ENCODE measurements at regions of chr9 and their contacts with region 1.

Region 1: GRCh38 chr9:70484210-70485130 is 70.0 kb upstream of the KLF9 start:
- DNase-seq: peak; percentile 59
- ATAC-seq: peak; percentile 92
- H3K4me3 ChIP-seq: no peak overlapping the region
- H3K27ac ChIP-seq: no peak overlapping the region
- H3K4me1 ChIP-seq: peaks cover 18% of the 10 kb centered on the region
- H3K27me3 ChIP-seq: peaks cover 0 to 22% of the 10 kb centered on the region in 2 experiments; a peak in 1 of 5 replicates
- CTCF ChIP-seq: peak; percentile 80
- EP300 ChIP-seq: no peak
- POLR2A ChIP-seq: no peak
- RAD21 ChIP-seq: peak; percentile 62

Region 2: GRCh38 chr9:69847491-69847890 is 637.0 kb before region 1 on chr9:
- CTCF ChIA-PET with region 1: no interaction called
- POLR2A ChIA-PET with region 1: no interaction called
- in situ Hi-C with region 1: no loop called
- intact Hi-C with region 1: no loop called
- DNase-seq: no peak
- ATAC-seq: no peak
- H3K4me3 ChIP-seq: no peak overlapping the region
- H3K27ac ChIP-seq: no peak overlapping the region
- H3K4me1 ChIP-seq: no peaks in the 10 kb centered on the region
- H3K27me3 ChIP-seq: no peaks in the 10 kb centered on the region
- CTCF ChIP-seq: no peak
- EP300 ChIP-seq: no peak
- POLR2A ChIP-seq: no peak
- RAD21 ChIP-seq: no peak

Region 3: GRCh38 chr9:69971643-69972449 is 512.6 kb before region 1 on chr9:
- CTCF ChIA-PET with region 1: no interaction called
- POLR2A ChIA-PET with region 1: no interaction called
- in situ Hi-C with region 1: no loop called
- intact Hi-C with region 1: loop called (anchors 5 kb)
- DNase-seq: peak; percentile 27
- ATAC-seq: peak; percentile 91
- H3K4me3 ChIP-seq: no peak overlapping the region
- H3K27ac ChIP-seq: no peak overlapping the region
- H3K4me1 ChIP-seq: no peaks in the 10 kb centered on the region
- H3K27me3 ChIP-seq: peaks cover 3 to 13% of the 10 kb centered on the region in 2 experiments; a peak in 2 of 5 replicates
- CTCF ChIP-seq: peak; percentile 90
- EP300 ChIP-seq: no peak
- POLR2A ChIP-seq: no peak
- RAD21 ChIP-seq: peak; percentile 65

Region 4: GRCh38 chr9:70303268-70303667 is 181.2 kb before region 1 on chr9:
- CTCF ChIA-PET with region 1: no interaction called
- POLR2A ChIA-PET with region 1: no interaction called
- in situ Hi-C with region 1: no loop called
- intact Hi-C with region 1: no loop called
- DNase-seq: no peak
- ATAC-seq: no peak
- H3K4me3 ChIP-seq: no peak overlapping the region
- H3K27ac ChIP-seq: no peak overlapping the region
- H3K4me1 ChIP-seq: no peaks in the 10 kb centered on the region
- H3K27me3 ChIP-seq: no peaks in the 10 kb centered on the region
- CTCF ChIP-seq: no peak
- EP300 ChIP-seq: no peak
- POLR2A ChIP-seq: no peak
- RAD21 ChIP-seq: no peak

Region 5: DNA sequence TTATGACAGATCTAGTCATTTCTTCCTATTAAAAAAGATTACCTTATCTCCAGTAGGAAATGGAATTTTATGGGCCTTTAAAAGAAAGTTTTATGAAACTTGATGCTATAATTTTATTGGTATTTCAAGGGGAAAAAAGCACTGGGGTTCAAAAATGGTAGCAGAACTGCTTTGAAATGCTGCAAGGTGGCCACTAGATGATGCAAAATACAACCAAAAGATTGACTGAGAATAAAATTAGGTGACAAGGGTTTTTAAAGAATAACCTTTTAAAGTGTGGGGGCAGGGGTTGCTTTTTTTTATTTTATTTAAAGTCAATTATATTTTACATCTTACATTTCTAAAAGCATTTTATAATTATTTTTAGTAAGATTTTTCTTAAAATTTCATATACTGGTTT is 131.7 kb before region 1 on chr9:
- CTCF ChIA-PET with region 1: no interaction called
- POLR2A ChIA-PET with region 1: no interaction called
- in situ Hi-C with region 1: loop called (anchors 5 kb)
- intact Hi-C with region 1: no loop called
- DNase-seq: no peak
- ATAC-seq: no peak
- H3K4me3 ChIP-seq: no peak overlapping the region
- H3K27ac ChIP-seq: no peak overlapping the region
- H3K4me1 ChIP-seq: no peaks in the 10 kb centered on the region
- H3K27me3 ChIP-seq: no peaks in the 10 kb centered on the region
- CTCF ChIP-seq: 0 out of 2 replicates have a peak, but pooled peaks have one; percentile 27
- EP300 ChIP-seq: no peak
- POLR2A ChIP-seq: no peak
- RAD21 ChIP-seq: no peak

Region 6: GRCh38 chr9:70419546-70420266 is 64.8 kb before region 1 on chr9:
- CTCF ChIA-PET with region 1: no interaction called
- POLR2A ChIA-PET with region 1: interaction called, 40 read pairs
- in situ Hi-C with region 1: loop called (anchors 5 kb)
- intact Hi-C with region 1: loop called (anchors 2 kb)
- DNase-seq: peak; percentile 91
- ATAC-seq: peak; percentile 61
- H3K4me3 ChIP-seq: peak overlapping the region; percentile 61 to 84 (median 67)
- H3K27ac ChIP-seq: peak overlapping the region; percentile 100
- H3K4me1 ChIP-seq: peaks cover 39% of the 10 kb centered on the region
- H3K27me3 ChIP-seq: peaks cover 0 to 4% of the 10 kb centered on the region in 2 experiments; a peak in 2 of 5 replicates
- CTCF ChIP-seq: 0 out of 2 replicates have a peak, but pooled peaks have one; percentile 6
- EP300 ChIP-seq: peak; percentile 22 to 78; a peak in 3 of 4 replicates
- POLR2A ChIP-seq: peak in 1 of 2 experiments; percentile 97; a peak in 2 of 4 replicates
- RAD21 ChIP-seq: 0 out of 2 replicates have a peak, but pooled peaks have one; percentile 10

Region 7: DNA sequence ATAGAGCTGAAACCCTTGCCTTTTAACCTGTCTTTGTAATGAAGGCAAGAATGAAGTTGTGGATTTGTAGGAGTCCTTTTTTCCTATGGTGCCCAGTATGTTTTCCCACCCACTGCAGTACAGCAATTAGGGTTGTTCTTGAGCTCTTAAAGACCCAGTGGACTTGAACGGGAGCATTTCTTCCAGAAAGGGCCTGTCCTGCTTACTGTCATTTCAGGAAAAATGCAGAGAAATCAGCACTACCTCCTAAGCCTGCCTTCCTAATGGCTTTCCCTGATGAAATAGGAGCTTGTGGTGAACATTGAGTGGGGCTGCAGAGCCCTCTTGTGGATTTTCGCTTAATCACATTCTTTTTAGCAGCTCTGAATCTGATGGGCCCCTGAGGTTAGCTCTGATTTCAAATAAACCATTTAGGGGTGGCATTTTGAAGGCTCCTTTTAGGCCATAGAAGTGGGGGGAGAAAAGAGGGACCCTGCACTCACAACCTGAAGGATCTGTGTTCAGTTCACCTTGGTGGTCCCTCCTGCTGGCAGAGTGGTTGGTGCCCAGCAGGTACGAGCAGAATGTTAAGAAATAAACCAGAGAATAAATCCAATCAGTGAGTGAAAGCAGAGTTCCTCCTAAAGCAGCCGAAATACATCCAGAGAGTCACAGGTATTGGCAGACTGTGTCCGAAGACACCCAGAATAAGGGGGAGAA is 118.0 kb after region 1 on chr9:
- CTCF ChIA-PET with region 1: no interaction called
- POLR2A ChIA-PET with region 1: no interaction called
- in situ Hi-C with region 1: no loop called
- intact Hi-C with region 1: loop called (anchors 1 kb)
- DNase-seq: peak; percentile 64
- ATAC-seq: peak; percentile 92
- H3K4me3 ChIP-seq: no peak overlapping the region
- H3K27ac ChIP-seq: no peak overlapping the region
- H3K4me1 ChIP-seq: peaks cover 9% of the 10 kb centered on the region; the same call in 1 of the 2 replicates
- H3K27me3 ChIP-seq: peaks cover 1 to 16% of the 10 kb centered on the region in 2 experiments; a peak in 4 of 5 replicates
- CTCF ChIP-seq: peak; percentile 85
- EP300 ChIP-seq: no peak
- POLR2A ChIP-seq: no peak
- RAD21 ChIP-seq: peak; percentile 80